ENCODE measurements at regions of chr19 and their contacts with region 1.

Region 1: DNA sequence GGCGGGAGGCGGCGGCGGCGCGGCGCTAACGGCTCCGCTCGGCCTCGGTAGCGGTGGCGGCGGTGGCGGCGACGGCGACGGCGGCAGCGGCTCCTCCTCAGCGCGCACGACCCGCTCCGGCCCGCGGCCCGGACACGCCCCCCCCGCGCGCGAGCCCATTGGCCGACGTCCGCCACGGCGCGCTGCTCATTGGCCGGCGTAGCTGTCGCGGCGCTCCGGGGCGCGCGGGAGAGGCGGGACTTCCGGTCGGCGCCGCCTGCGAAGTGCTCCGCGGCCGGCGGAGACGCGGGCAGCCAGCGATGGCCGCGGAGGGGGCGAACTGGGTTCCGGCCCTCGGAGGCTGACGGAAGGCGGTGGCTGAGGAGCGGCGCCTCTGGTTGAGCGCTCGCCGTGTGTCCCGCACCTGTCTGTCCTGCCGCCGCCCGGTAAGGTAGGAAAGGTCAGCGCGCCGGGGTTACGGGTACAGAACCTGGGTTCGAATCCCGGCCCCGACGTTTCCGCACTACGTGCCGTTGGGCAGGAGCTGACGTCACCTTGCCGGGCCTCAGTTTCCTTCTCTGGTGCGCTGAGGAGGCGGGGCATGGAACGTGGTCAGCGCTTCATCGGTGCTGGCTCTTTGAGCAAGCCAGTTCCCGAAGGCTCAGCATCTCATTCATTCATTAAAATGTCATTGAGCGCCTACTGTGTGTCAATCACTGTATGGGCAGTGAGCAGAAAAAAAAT is at the start of gene ELAVL1:
- DNase-seq: peak; percentile 85
- ATAC-seq: peak; percentile 93
- H3K4me3 ChIP-seq: peak within 1 kb of the TSS; percentile 99
- H3K27ac ChIP-seq: peak within 1 kb of the TSS; percentile 97
- H3K4me1 ChIP-seq: peaks cover 12% of the 10 kb centered on the region
- H3K27me3 ChIP-seq: no peaks in the 10 kb centered on the region
- CTCF ChIP-seq: no peak
- POLR2A ChIP-seq: peak; percentile 88
- RAD21 ChIP-seq: no peak
- total RNA-seq, gene ELAVL1: 56.9 and 59.0 TPM in 2 replicates

Region 2: DNA sequence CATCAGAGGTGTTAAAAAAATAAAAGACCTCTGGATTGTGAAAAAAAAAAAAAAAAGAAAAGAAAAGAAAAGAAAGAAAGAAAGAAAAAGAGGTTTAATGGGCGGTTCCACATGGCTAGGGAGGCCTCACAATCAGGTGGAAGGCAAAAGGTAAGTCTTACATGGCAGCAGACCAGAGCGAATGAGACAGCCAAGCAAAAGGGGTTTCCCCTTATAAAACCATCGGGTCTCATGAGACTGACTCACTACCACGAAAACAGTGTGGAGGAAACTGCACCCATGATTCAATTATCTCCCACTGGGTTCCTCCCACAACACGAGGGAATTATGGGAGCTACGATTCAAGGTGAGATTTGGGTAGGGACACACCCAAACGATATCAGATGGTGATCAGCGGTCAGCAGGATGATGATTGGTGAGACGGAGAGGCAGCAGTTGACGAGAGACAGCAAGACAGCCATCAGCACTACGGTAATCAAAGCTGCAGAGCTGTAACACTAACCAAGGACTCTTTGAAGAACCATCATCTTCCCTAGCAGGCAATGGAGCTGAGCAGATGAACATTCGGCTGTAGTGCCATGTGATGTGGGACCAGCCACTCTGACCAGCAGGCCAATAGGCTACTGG is 254.4 kb before region 1 on chr19:
- CTCF ChIA-PET with region 1: no interaction called
- POLR2A ChIA-PET with region 1: no interaction called
- dilution Hi-C with region 1: no loop called
- in situ Hi-C with region 1: no loop called
- intact Hi-C with region 1: no loop called
- DNase-seq: peak; percentile 6
- ATAC-seq: no peak
- H3K4me3 ChIP-seq: no peak overlapping the region
- H3K27ac ChIP-seq: no peak overlapping the region
- H3K4me1 ChIP-seq: no peaks in the 10 kb centered on the region
- H3K27me3 ChIP-seq: no peaks in the 10 kb centered on the region
- CTCF ChIP-seq: no peak
- POLR2A ChIP-seq: no peak
- RAD21 ChIP-seq: no peak

Region 3: GRCh38 chr19:7943444-7944176 is 62.1 kb before region 1 on chr19 and contains the start of gene TIMM44:
- CTCF ChIA-PET with region 1: interaction called, 5 read pairs
- POLR2A ChIA-PET with region 1: no interaction called
- dilution Hi-C with region 1: no loop called
- in situ Hi-C with region 1: no loop called
- intact Hi-C with region 1: loop called (anchors 2 kb)
- DNase-seq: peak; percentile 99
- ATAC-seq: peak; percentile 99
- H3K4me3 ChIP-seq: peak within 1 kb of the TSS; percentile 61
- H3K27ac ChIP-seq: peak within 1 kb of the TSS; percentile 80
- H3K4me1 ChIP-seq: no peaks in the 10 kb centered on the region
- H3K27me3 ChIP-seq: no peaks in the 10 kb centered on the region
- CTCF ChIP-seq: no peak
- POLR2A ChIP-seq: peak; percentile 91
- RAD21 ChIP-seq: no peak
- total RNA-seq, gene TIMM44: 37.6 and 43.0 TPM in 2 replicates

Region 4: GRCh38 chr19:7953060-7953459 is 52.6 kb before region 1 on chr19:
- CTCF ChIA-PET with region 1: interaction called, 4 read pairs
- POLR2A ChIA-PET with region 1: interaction called, 10 read pairs
- dilution Hi-C with region 1: no loop called
- in situ Hi-C with region 1: no loop called
- intact Hi-C with region 1: no loop called
- DNase-seq: peak; percentile 21
- ATAC-seq: peak; percentile 81
- H3K4me3 ChIP-seq: no peak overlapping the region
- H3K27ac ChIP-seq: no peak overlapping the region
- H3K4me1 ChIP-seq: no peaks in the 10 kb centered on the region; the same call in 1 of the 2 replicates
- H3K27me3 ChIP-seq: no peaks in the 10 kb centered on the region
- CTCF ChIP-seq: no peak
- POLR2A ChIP-seq: no peak
- RAD21 ChIP-seq: no peak

Region 5: GRCh38 chr19:7970716-7971448 is 34.8 kb before region 1 on chr19:
- CTCF ChIA-PET with region 1: interaction called, 3 read pairs
- POLR2A ChIA-PET with region 1: no interaction called
- dilution Hi-C with region 1: no loop called
- in situ Hi-C with region 1: no loop called
- intact Hi-C with region 1: loop called (anchors 1 kb)
- DNase-seq: peak; percentile 28
- ATAC-seq: peak; percentile 92
- H3K4me3 ChIP-seq: no peak overlapping the region
- H3K27ac ChIP-seq: no peak overlapping the region
- H3K4me1 ChIP-seq: no peaks in the 10 kb centered on the region
- H3K27me3 ChIP-seq: no peaks in the 10 kb centered on the region
- CTCF ChIP-seq: peak; percentile 69
- POLR2A ChIP-seq: no peak
- RAD21 ChIP-seq: peak; percentile 81

Region 6: GRCh38 chr19:8910775-8911414 is 905.2 kb after region 1 on chr19:
- CTCF ChIA-PET with region 1: no interaction called
- POLR2A ChIA-PET with region 1: no interaction called
- dilution Hi-C with region 1: no loop called
- in situ Hi-C with region 1: no loop called
- intact Hi-C with region 1: no loop called
- DNase-seq: no peak
- ATAC-seq: no peak
- H3K4me3 ChIP-seq: no peak overlapping the region
- H3K27ac ChIP-seq: no peak overlapping the region
- H3K4me1 ChIP-seq: no peaks in the 10 kb centered on the region
- H3K27me3 ChIP-seq: no peaks in the 10 kb centered on the region
- CTCF ChIP-seq: no peak
- POLR2A ChIP-seq: no peak
- RAD21 ChIP-seq: no peak

Measured in IMR-90 (cell line).